Transverse colon (tissue), 4 donors: ENCODE measurements at regions of chr16 and their contacts with region 1.

Region 1: GRCh38 chr16:48353565-48354163 is 31.5 kb downstream of the SIAH1 start:
- DNase-seq: peak; percentile 66
- H3K4me3 ChIP-seq: no peak overlapping the region
- H3K27ac ChIP-seq: peak overlapping the region in 1 of 4 donors; percentile 27
- H3K4me1 ChIP-seq: no peaks in the 10 kb centered on the region
- H3K27me3 ChIP-seq: no peaks in the 10 kb centered on the region
- CTCF ChIP-seq: peak; percentile 83 to 97 (median 91)
- EP300 ChIP-seq: no peak
- POLR2A ChIP-seq: no peak

Region 2: GRCh38 chr16:48499923-48500381 is 146.3 kb after region 1 on chr16:
- in situ Hi-C with region 1: loop called in 1 of 4 experiments (anchors 25 kb)
- intact Hi-C with region 1: no loop called
- DNase-seq: peak; percentile 28
- H3K4me3 ChIP-seq: no peak overlapping the region
- H3K27ac ChIP-seq: peak overlapping the region; percentile 52 to 60 (median 56)
- H3K4me1 ChIP-seq: peaks cover 0 to 24% (median 6%) of the 10 kb centered on the region in 4 donors
- H3K27me3 ChIP-seq: no peaks in the 10 kb centered on the region
- CTCF ChIP-seq: no peak
- EP300 ChIP-seq: no peak
- POLR2A ChIP-seq: no peak

Region 3: DNA sequence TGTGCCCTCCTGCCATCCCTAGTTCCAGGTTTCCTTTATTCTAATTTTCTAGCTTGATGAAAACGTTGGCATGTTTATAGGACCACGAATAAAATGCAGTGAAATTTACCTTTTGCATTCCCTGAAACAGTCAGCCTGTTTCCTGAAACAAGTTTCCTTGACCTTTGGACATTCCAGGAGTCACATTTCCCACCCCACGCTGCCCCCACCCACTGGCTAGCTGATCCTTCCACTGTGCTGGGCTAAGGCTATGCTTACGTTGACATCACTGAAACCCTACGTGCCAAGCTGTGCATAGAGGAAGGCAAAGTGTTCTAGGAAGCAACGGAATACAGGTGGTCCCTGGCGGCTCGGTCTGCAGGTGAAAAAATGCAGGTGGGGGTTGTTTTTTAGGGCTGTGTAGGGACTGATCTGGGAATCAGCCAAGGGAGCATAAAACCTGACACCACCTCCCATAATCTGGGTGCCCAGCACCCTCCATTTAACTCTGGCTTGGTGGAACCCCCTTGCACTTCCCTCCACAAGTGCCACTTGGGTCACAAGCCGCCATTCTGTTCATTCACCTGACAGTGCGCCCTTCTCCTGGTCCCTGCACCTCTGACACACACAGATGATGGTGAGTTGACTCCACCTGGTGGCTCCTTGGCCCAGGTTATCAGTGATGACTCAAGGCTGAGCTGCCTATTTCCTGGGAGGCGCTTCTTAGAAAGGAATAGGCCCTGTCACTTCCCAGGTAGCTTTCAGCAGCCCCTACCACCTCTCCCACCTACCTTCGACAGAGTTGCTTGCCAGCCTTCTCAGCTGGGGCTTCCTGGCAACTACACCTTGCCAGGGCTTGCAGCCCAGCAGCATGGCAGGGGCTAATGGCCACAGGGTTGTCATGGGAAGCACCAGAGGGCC is 172.6 kb after region 1 on chr16:
- in situ Hi-C with region 1: loop called (anchors 10 to 25 kb)
- intact Hi-C with region 1: no loop called
- DNase-seq: peak; percentile 81
- H3K4me3 ChIP-seq: no peak overlapping the region
- H3K27ac ChIP-seq: no peak overlapping the region
- H3K4me1 ChIP-seq: peaks cover 0 to 9% (median 3%) of the 10 kb centered on the region in 4 donors
- H3K27me3 ChIP-seq: no peaks in the 10 kb centered on the region
- CTCF ChIP-seq: peak in 4 of 5 experiments; percentile 42 to 87 (median 58)
- EP300 ChIP-seq: no peak
- POLR2A ChIP-seq: no peak

Region 4: GRCh38 chr16:48542020-48542473 is 188.4 kb after region 1 on chr16:
- in situ Hi-C with region 1: loop called in 1 of 4 experiments (anchors 25 kb)
- intact Hi-C with region 1: no loop called
- DNase-seq: peak; percentile 48
- H3K4me3 ChIP-seq: no peak overlapping the region
- H3K27ac ChIP-seq: no peak overlapping the region
- H3K4me1 ChIP-seq: peaks cover 10 to 36% (median 17%) of the 10 kb centered on the region in 4 donors
- H3K27me3 ChIP-seq: no peaks in the 10 kb centered on the region
- CTCF ChIP-seq: peak; percentile 35 to 52 (median 49)
- EP300 ChIP-seq: no peak
- POLR2A ChIP-seq: no peak

Region 5: GRCh38 chr16:48623304-48624016 is 269.8 kb after region 1 on chr16:
- in situ Hi-C with region 1: loop called in 3 of 4 experiments (anchors 10 to 25 kb)
- intact Hi-C with region 1: loop called (anchors 5 kb)
- DNase-seq: peak; percentile 88
- H3K4me3 ChIP-seq: peak overlapping the region; percentile 19 to 50 (median 30)
- H3K27ac ChIP-seq: peak overlapping the region; percentile 64 to 79 (median 72)
- H3K4me1 ChIP-seq: peaks cover 10 to 22% (median 12%) of the 10 kb centered on the region in 4 donors
- H3K27me3 ChIP-seq: no peaks in the 10 kb centered on the region
- CTCF ChIP-seq: peak; percentile 95 to 99 (median 98)
- EP300 ChIP-seq: no peak
- POLR2A ChIP-seq: peak; percentile 34

Region 6: DNA sequence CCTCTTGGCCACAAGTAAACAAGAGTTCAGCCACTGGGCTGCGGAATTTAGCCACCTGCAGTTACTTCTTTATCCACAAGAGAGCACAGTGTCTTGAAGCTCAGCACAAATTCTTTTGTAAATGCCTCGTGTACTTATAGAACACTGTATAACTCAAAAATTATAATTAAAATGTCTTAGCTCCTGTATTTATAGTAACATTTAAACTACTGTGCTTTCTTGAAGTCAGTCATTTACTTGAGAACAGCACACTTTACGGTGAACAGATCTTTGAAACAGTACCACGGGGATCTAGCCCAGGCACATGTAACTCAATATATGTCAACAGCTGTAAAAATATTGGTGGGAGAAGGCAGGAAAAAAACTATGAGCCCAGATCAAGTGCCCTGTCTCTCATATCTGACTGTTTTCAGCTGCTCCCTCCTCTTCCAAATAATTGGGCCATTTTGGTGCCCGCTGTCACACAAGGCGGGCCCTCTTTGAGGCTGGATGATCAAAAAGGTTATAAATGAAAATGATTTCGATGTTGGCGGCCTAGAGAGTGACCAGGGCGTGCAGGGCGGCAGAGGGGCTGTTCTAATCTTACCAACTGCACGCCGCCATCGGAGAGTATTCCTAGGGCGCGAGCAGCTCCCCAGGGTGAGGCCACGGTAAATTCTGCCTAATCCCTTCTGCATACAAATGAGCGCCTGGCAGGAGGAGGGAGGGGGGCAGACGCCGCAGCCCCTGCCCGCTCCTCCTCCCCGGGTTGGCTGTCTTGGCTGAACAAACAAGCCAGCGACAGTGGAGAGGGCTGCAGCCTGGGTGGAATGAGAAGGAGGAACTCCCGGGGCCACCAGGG is 1203.2 kb after region 1 on chr16:
- in situ Hi-C with region 1: no loop called
- intact Hi-C with region 1: no loop called
- DNase-seq: no peak
- H3K4me3 ChIP-seq: no peak overlapping the region
- H3K27ac ChIP-seq: no peak overlapping the region
- H3K4me1 ChIP-seq: no peaks in the 10 kb centered on the region
- H3K27me3 ChIP-seq: no peaks in the 10 kb centered on the region
- CTCF ChIP-seq: peak; percentile 27 to 40 (median 35)
- EP300 ChIP-seq: no peak
- POLR2A ChIP-seq: no peak